ENCODE measurements at regions of chr11 and their contacts with region 1.

Region 1: DNA sequence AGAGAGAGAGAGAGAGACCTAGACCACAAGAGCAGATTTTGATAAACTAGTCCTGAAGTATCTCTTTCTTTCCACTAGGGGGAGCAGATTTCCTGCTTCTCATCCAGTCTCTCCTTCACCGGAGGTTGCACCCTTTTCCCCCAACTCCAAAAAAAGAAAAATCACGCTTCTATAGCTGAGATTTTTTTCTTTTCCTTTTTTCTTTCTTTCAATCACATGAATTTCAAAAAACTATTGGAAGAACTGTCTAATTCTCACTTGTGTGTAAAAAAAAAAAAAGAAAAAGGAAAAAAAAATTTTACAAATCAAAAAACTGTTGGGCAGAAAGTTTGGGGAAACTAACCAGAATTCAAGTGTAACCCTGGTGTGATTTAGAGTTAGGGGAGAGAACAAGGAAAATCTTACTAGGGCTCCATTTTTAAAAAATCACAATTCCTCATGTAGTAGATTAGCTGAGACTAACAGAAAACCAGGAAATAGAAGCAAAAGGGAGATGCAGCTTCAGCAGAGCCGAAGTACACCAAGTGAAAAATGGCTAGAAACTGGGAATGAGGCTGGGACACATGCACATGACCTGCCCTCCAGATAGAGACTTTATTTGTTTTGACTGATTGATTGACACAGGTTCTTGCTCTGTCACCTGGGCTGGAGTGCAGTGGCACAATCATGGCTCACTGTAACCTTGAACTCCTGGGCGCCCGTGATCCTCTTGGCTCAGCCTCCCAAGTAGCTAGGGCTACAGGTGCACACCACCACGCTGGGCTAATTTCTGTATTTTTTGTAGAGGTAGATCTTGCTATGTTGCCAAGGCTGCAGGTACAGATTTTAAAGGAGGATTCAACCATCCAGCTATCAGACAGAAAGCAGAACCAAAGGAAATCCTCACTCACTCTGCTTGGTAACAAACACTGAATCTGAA is 27.1 kb downstream of the SDHD start:
- DNase-seq: no peak
- H3K4me3 ChIP-seq: no peak overlapping the region
- CTCF ChIP-seq: no peak
- POLR2A ChIP-seq: no peak

Region 2: DNA sequence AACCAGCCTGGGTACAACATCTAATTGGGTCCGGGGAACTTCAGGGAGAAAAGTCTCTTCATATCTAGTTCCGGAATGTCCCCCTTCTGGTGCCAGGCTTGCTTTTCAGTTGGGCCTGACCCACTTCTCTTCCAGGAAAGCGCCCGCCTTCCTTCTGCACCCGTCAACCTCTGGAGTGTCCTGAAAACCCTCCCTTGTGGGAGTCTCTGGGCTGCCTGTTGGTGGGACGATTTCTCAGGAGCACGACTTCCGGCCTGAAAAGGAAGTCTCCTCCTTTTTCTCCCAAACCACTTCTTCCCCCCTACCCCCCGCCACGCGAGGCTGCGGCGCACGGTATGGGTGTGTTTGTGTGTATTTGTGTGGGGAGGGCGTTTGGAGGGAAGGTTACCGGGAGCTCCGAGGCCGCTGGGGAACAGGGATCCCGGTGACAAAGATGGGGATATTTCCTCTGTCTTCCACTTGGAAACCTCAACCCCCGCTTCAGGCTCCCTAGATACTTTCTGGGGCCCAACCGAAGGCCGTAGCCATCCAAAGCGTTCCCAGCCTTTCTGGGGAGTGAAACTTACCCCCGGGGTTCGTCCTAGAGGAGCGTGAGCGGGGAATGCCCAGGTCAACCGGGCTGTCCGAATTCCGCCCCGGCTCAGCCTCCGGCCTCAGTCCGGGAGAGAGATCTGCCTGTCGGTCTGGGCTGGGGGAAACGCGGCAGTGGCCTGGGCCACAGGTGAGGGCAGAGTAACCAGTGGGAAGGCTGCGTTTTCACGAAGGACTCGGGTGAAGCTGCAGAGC is 39.6 kb before region 1 on chr11 and contains the start of gene NKAPD1:
- intact Hi-C with region 1: no loop called
- DNase-seq: peak; percentile 73 to 95
- H3K4me3 ChIP-seq: peak within 1 kb of the TSS; percentile 62
- CTCF ChIP-seq: no peak
- POLR2A ChIP-seq: no peak
- total RNA-seq, gene NKAPD1: 8.5 to 15.6 (median 12.3) TPM

Region 3: DNA sequence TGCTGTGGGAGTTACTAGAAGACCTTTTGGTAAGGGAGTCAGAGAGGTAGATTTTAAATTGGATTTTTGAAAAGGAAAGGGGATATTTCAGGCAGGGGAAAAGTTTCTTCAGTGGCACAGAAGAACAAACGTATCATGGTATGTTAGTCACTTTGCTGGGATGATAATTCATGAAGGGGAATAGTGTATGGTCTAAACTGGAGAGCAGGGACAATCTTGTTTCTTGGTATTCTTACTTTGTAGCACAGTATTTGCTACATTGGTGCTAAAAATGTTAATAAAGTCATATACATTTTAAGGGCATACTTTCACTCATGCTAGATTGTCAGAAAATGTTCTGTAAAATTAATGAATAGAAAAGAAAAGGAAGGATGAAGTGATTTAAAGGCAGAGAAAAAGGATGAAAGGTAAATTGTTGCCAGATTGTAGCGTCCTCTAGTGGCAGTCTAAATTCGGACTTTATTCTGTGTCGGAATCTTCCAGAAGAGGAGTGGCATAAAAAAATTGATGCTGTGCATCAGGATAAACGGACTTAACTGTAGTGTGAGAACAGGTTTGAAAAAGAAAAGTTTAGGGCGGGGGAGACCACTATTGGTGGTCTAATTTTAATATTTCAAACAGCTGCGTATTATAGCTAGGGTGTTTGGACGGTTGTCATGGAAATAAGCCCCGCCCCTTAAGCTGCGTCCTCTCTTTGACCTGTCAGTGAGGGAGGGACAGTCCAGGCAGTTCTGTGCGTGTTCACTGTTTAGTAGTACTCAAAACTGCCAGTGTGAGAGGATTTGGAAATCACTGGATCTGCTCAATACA is 61.2 kb after region 1 on chr11 and contains the start of gene BCO2:
- intact Hi-C with region 1: loop called (anchors 10 kb)
- DNase-seq: peak; percentile 74 to 91
- H3K4me3 ChIP-seq: no peak within 1 kb of the TSS
- CTCF ChIP-seq: peak in 1 of 3 donors; percentile 59
- POLR2A ChIP-seq: no peak
- total RNA-seq, gene BCO2: 0.98 to 5.7 (median 3.7) TPM

Measured in lower leg skin (tissue), 4 donors.